AG04450 (cell line): ENCODE measurements at regions of chr16 and their contacts with region 1.

Region 1: DNA sequence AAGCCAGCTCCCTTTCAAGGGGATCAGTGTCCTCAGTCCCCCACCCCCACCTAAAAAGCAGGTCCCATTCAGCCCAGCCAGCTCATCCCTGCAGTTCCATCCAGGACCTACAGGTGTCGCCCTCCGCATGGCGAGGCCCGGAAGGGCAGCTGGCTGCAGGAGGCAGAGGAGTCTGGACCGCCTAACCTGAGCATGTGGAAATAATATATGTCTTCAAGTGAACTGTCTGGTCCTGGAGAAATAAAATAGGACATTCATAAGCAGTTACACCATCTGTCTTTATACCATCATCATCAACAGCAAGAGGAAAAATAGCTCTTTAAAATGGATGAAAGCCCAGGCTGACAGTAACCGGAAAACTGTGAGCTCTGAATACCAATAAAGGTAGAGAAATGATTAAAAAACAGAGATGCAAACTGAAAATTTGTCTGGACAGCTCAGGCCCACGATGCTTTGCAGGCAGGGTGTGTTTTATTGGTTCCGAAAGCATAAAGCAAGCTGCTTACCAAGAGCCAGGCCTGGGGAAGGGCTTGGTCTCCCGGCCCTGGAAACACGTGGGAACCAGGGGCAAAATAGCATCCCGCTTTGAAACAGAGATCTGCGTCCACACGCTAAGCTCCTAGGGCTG is 215.2 kb downstream of the ZFHX3 start:
- DNase-seq: no peak
- H3K4me3 ChIP-seq: no peak overlapping the region
- H3K27ac ChIP-seq: no peak overlapping the region
- H3K27me3 ChIP-seq: no peaks in the 10 kb centered on the region
- CTCF ChIP-seq: peak; percentile 100

Region 2: DNA sequence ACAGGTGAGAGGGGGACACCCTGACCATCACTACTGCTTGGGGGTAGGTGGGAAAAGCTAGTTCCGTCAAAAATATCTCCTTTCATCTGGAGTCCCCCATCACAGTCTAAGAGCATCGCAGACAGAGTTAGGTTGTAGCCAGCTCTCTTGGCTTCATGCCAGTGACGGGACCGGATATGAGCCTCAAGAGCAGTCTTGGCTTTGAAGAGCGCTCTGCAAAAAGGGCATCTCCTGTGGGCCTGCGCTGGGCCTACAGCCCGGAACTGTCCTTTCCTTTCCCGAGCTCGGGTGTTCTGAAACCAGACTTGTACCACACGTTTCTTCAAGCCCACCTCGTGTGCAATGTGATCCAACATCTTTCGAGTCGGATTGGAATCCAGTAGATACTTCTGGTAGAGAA is 38.4 kb before region 1 on chr16:
- CTCF ChIA-PET with region 1: interaction called, 14 read pairs
- POLR2A ChIA-PET with region 1: no interaction called
- DNase-seq: no peak
- H3K4me3 ChIP-seq: no peak overlapping the region
- H3K27ac ChIP-seq: no peak overlapping the region
- H3K27me3 ChIP-seq: no peaks in the 10 kb centered on the region
- CTCF ChIP-seq: no peak

Region 3: GRCh38 chr16:72847187-72848027 is 14.7 kb after region 1 on chr16:
- CTCF ChIA-PET with region 1: interaction called, 120 read pairs
- POLR2A ChIA-PET with region 1: no interaction called
- DNase-seq: no peak
- H3K4me3 ChIP-seq: no peak overlapping the region
- H3K27ac ChIP-seq: no peak overlapping the region
- H3K27me3 ChIP-seq: no peaks in the 10 kb centered on the region
- CTCF ChIP-seq: peak; percentile 44

Region 4: GRCh38 chr16:72910381-72910780 is 77.6 kb after region 1 on chr16:
- CTCF ChIA-PET with region 1: interaction called, 15 read pairs
- POLR2A ChIA-PET with region 1: no interaction called
- DNase-seq: no peak
- H3K4me3 ChIP-seq: no peak overlapping the region
- H3K27ac ChIP-seq: no peak overlapping the region
- H3K27me3 ChIP-seq: no peaks in the 10 kb centered on the region
- CTCF ChIP-seq: no peak

Region 5: GRCh38 chr16:72952811-72953595 is 120.3 kb after region 1 on chr16:
- CTCF ChIA-PET with region 1: interaction called, 12 read pairs
- POLR2A ChIA-PET with region 1: no interaction called
- DNase-seq: peak; percentile 67
- H3K4me3 ChIP-seq: no peak overlapping the region
- H3K27ac ChIP-seq: peak overlapping the region; percentile 61
- H3K27me3 ChIP-seq: no peaks in the 10 kb centered on the region
- CTCF ChIP-seq: no peak

Region 6: DNA sequence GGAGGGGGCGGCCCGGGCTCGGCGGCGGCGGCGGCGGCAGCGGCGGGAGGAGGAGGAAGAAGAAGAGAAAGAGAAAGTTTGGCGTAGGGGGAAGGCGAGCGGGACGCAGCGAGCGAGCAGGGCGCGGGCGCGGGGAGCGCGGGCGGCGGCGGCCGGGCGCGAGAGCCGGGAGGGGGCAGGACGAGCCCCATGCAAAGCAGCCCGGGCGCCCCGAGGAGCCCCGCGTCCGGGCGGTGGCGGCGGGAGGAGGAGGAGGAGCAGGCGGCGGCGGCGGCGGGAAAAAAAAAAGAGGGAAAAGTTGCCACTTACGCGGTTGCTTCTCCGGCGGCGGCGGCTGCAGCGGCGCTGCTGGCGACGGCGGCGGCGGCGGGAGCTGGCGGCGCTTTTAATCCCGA is 225.5 kb after region 1 on chr16:
- CTCF ChIA-PET with region 1: interaction called, 55 read pairs
- POLR2A ChIA-PET with region 1: interaction called, 9 read pairs
- DNase-seq: no peak
- H3K4me3 ChIP-seq: peak overlapping the region; percentile 72
- H3K27ac ChIP-seq: no peak overlapping the region
- H3K27me3 ChIP-seq: no peaks in the 10 kb centered on the region
- CTCF ChIP-seq: no peak

Region 7: DNA sequence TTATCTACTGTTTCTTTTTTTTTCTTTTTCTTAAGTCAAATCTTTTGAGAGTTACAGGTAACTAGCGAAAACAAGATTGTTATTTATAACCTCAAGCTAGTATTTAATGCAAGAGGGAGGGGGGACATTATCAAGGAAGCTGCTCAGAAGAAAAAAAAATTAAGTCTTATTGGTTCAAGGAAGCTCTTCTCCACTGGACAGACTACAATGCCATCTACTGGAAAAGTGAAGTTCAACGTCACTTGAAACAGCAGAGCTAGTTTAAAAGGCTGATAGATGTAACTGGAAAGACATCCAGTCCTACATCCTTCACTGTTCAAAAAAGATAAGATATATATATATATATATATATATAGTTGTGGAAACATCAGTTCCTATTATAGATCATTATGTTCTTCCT is 1045.9 kb after region 1 on chr16:
- CTCF ChIA-PET with region 1: interaction called, 28 read pairs
- POLR2A ChIA-PET with region 1: no interaction called
- DNase-seq: peak; percentile 39
- H3K4me3 ChIP-seq: no peak overlapping the region
- H3K27ac ChIP-seq: no peak overlapping the region
- H3K27me3 ChIP-seq: peaks cover 2% of the 10 kb centered on the region
- CTCF ChIP-seq: peak; percentile 69